Activated naive CD4-positive, alpha-beta T cell treated with anti-CD3 and anti-CD28 coated beads for 36 hours (primary cell): ENCODE measurements at regions of chr6 and their contacts with region 1.

Region 1: DNA sequence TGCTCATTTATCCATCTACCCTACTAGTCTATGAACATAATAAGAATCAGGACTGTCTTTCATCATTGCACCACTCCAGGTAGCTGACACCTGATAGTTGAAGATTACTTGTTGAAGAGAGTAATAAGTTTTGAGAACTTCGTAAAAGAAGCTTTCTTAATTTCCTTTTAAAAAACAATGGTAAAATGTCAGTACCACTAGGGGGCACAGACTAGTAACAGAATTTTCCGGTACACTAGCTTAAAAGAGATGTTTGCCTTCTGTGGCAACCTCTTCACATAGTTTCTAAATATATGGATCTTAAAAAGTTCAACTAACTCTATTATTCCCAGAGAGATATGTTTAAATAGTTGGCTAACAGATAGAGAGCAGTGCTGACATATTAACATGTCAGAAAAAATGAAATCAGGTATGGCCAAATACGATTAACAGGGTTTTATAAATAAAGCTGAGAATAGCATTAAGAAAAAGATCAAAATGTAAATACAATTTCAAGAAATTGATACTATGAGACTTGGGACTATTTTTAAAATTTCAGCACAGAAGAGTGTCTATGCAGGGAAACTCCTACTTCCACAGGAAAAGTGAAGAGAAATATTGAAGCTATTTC is 5.4 kb upstream of the KCNQ5 start:
- DNase-seq: no peak
- H3K4me3 Mint-ChIP-seq: no peak overlapping the region
- H3K27ac Mint-ChIP-seq: no peak overlapping the region
- H3K4me1 Mint-ChIP-seq: peaks cover 52% of the 10 kb centered on the region
- H3K27me3 Mint-ChIP-seq: no peaks in the 10 kb centered on the region

Region 2: DNA sequence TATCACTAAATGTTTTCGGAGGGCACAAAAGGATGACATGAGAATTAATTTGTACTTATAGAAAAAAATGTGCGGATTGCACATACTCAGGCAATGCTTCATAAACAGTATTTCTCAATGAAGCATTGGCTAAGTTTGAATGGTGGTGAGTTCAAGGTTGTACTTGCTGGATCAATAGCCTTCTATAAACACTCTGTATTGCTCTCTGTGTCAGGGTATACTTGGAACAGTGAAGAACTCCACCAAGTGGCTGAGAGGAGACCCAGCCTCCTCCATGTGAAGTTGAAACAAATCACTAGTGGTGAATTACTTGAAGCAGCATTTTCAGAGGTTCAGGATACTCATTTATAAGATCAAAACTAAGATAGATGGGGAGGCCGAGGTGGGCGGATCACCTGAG is 369.6 kb before region 1 on chr6:
- CTCF ChIA-PET with region 1: no interaction called
- intact Hi-C with region 1: no loop called
- DNase-seq: no peak
- H3K4me3 Mint-ChIP-seq: no peak overlapping the region
- H3K27ac Mint-ChIP-seq: no peak overlapping the region
- H3K4me1 Mint-ChIP-seq: no peaks in the 10 kb centered on the region
- H3K27me3 Mint-ChIP-seq: no peaks in the 10 kb centered on the region

Region 3: GRCh38 chr6:72401865-72402264 is 214.6 kb before region 1 on chr6:
- CTCF ChIA-PET with region 1: no interaction called
- intact Hi-C with region 1: no loop called
- DNase-seq: no peak
- H3K4me3 Mint-ChIP-seq: no peak overlapping the region
- H3K27ac Mint-ChIP-seq: no peak overlapping the region
- H3K4me1 Mint-ChIP-seq: no peaks in the 10 kb centered on the region
- H3K27me3 Mint-ChIP-seq: no peaks in the 10 kb centered on the region

Region 4: DNA sequence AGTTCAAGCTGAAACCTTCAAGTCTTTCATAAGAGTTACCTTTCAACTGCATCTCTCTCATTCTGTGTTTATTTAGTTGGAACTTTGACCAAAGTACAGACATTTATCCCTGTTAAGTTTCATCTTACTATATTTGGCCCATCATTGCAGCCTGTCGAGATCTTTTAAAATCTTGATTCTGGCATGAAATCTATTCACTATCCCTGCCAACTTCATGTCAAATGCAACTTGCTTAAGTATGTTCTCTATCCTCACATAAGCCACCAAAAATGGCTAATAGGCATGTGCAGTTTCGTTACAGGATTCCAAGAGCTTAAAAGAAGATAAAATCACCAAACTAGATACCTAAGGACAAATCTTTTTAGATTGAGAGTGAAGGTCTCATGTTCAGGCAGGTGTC is 112.1 kb before region 1 on chr6:
- CTCF ChIA-PET with region 1: no interaction called
- intact Hi-C with region 1: no loop called
- DNase-seq: no peak
- H3K4me3 Mint-ChIP-seq: no peak overlapping the region
- H3K27ac Mint-ChIP-seq: no peak overlapping the region
- H3K4me1 Mint-ChIP-seq: no peaks in the 10 kb centered on the region
- H3K27me3 Mint-ChIP-seq: peaks cover 7% of the 10 kb centered on the region

Region 5: GRCh38 chr6:72589096-72589495 is 27.4 kb before region 1 on chr6:
- CTCF ChIA-PET with region 1: interaction called, 16 read pairs
- intact Hi-C with region 1: no loop called
- DNase-seq: no peak
- H3K4me3 Mint-ChIP-seq: no peak overlapping the region
- H3K27ac Mint-ChIP-seq: no peak overlapping the region
- H3K4me1 Mint-ChIP-seq: peaks cover 13% of the 10 kb centered on the region
- H3K27me3 Mint-ChIP-seq: no peaks in the 10 kb centered on the region

Region 6: GRCh38 chr6:72636215-72636614 is 19.7 kb after region 1 on chr6:
- CTCF ChIA-PET with region 1: interaction called, 15 read pairs
- intact Hi-C with region 1: no loop called
- DNase-seq: no peak
- H3K4me3 Mint-ChIP-seq: no peak overlapping the region
- H3K27ac Mint-ChIP-seq: no peak overlapping the region
- H3K4me1 Mint-ChIP-seq: peaks cover 21% of the 10 kb centered on the region
- H3K27me3 Mint-ChIP-seq: no peaks in the 10 kb centered on the region

Region 7: GRCh38 chr6:72704979-72705378 is 88.5 kb after region 1 on chr6:
- CTCF ChIA-PET with region 1: no interaction called
- intact Hi-C with region 1: no loop called
- DNase-seq: no peak
- H3K4me3 Mint-ChIP-seq: no peak overlapping the region
- H3K27ac Mint-ChIP-seq: no peak overlapping the region
- H3K4me1 Mint-ChIP-seq: peaks cover 2% of the 10 kb centered on the region
- H3K27me3 Mint-ChIP-seq: no peaks in the 10 kb centered on the region

Region 8: DNA sequence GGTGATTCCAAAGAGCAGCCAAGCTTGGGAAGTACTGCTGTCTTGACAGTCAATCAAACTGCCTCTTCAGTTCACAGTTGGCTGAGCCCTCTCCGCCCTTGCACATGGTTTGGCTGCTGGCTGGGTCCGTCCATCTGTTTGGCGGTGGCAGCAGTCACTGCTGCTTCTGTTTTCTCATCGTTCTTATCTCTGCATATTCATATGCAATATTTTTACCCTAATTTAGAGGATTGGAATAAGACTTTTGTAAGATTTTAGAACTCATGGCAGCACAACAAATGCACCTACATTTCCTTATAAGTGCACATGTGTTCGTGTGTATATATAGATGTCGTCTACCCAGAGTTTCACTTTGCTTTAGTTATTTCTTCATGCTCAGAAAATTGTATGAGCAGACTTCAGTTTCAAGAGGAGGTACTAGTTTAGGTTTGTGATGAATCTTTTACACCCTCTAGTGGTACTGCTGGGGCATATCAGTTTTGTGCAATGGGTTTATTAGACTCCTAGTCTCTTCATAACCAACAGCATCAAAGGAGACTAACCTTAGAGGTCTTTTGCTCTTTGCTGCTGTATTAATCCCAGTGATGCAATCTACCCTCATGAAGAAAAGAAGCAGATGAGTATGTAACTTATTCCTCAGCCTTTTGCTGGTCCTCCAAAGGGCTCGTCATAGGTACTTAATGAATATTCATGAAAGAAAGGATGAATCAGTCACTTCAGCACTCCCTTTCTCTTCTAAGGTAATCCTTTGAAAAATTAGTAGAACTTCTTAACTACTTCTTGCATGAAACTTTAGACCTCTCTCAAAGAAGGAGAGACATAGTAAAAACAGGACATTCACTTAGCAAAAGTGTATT is 564.5 kb after region 1 on chr6:
- CTCF ChIA-PET with region 1: interaction called, 5 read pairs
- intact Hi-C with region 1: loop called (anchors 1 kb)
- DNase-seq: peak; percentile 12
- H3K4me3 Mint-ChIP-seq: no peak overlapping the region
- H3K27ac Mint-ChIP-seq: no peak overlapping the region
- H3K4me1 Mint-ChIP-seq: peaks cover 4% of the 10 kb centered on the region
- H3K27me3 Mint-ChIP-seq: no peaks in the 10 kb centered on the region